ENCODE measurements at regions of chr5 and their contacts with region 1.

Region 1: GRCh38 chr5:139745800-139746690 is 49.6 kb upstream of the PSD2 start:
- DNase-seq: peak; percentile 84
- ATAC-seq: peak; percentile 29
- H3K4me3 ChIP-seq: peak overlapping the region in 4 of 5 experiments; percentile 57 to 71 (median 58)
- H3K4me3 Mint-ChIP-seq: peak overlapping the region; percentile 89
- H3K27ac ChIP-seq: peak overlapping the region; percentile 82 to 85
- H3K27ac Mint-ChIP-seq: peak overlapping the region; percentile 94
- H3K4me1 ChIP-seq: peaks cover 50 to 68% of the 10 kb centered on the region in 2 donors
- H3K4me1 Mint-ChIP-seq: peaks cover 79% of the 10 kb centered on the region
- H3K27me3 ChIP-seq: peaks cover 0 to 2% (median 0%) of the 10 kb centered on the region in 4 experiments
- H3K27me3 Mint-ChIP-seq: no peaks in the 10 kb centered on the region
- CTCF ChIP-seq: no peak

Region 2: DNA sequence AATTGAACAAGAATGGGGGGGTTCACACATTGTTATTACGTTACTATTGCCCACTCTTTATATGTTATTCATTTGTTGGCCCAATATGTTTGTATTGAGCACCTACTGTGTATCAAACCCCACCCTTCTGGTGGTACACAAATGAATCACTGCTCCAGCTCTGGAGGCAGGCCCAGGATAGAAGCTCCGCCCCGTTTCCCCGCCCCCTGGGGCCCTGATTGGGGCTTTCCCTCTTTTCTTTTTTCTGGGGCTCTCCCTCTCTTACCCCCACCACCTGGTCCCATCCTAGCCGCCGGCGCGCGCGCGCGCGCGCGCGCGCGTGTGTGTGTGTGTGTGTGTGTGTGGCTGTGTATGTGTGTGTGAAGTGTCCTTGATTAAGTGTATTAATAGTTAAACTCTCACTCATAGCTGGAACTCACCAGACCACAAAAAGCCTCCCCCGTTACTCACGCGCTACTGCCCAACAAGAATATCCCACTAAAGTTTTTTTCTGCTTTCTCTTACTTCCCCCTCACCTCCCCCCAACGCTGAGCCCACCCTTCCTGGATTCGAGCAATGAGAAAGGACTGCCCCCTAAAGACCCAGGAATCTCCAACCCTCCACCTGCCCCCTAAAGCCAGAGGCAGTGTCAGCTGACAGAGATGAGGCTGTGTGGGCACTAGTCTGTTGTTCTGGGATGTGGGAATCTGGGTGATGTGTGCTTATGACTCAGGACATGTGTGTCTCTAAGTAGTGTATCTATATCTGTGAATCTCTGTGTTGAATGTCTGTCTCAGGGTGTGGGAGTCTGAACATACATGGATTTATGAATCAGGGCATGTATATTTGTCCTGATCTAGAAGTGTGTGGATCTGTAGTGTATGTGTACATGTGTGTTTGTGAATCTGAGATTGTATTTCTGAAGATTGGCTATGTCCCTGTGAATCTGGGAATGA is 93.9 kb before region 1 on chr5:
- CTCF ChIA-PET with region 1: interaction called, 8 read pairs
- POLR2A ChIA-PET with region 1: interaction called, 32 read pairs
- intact Hi-C with region 1: loop called (anchors 2 kb)
- DNase-seq: peak; percentile 92
- ATAC-seq: peak; percentile 50
- H3K4me3 ChIP-seq: peak overlapping the region; percentile 50 to 98 (median 95)
- H3K4me3 Mint-ChIP-seq: peak overlapping the region; percentile 88
- H3K27ac ChIP-seq: peak overlapping the region; percentile 71 to 90
- H3K27ac Mint-ChIP-seq: peak overlapping the region; percentile 94
- H3K4me1 ChIP-seq: peaks cover 68 to 74% of the 10 kb centered on the region in 2 donors
- H3K4me1 Mint-ChIP-seq: peaks cover 71% of the 10 kb centered on the region
- H3K27me3 ChIP-seq: no peaks in the 10 kb centered on the region
- H3K27me3 Mint-ChIP-seq: no peaks in the 10 kb centered on the region
- CTCF ChIP-seq: no peak

Region 3: DNA sequence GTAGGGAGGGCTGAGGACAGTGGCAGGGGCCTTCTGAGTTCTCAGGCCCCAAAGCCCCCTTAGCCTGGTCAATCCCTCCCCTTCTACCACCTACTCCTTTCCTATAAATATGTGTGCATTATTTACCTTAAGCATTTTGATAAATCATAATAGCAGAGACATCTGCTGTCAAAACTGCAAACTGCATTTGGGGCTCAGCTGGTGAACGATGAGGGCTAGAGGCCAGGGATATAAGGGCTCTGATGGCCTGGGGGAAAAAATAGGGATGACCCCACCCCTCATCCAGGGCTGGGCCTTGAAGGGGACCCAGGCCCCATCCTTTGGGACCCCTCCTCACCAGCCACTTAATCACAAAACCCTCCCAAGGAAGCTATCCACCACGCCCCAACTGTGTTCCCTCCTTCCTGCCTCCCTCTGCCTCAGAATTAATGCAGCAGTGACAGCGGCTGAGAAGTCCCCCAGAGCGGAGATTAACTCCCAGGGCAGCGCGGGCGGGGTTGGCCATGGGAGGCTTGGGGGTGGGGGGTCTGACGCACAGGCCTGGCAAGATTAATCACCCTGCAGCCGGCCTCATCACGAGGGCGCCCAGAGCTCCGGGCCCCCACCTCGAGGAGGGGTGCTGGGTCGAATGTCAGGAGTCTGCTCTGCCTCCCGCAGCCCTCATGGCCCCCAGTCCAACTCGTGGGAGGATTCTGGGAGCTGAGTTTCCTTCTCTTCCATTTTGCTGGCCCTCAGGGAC is 55.8 kb before region 1 on chr5:
- CTCF ChIA-PET with region 1: interaction called, 10 read pairs
- POLR2A ChIA-PET with region 1: interaction called, 6 read pairs
- intact Hi-C with region 1: loop called (anchors 10 kb)
- DNase-seq: peak; percentile 71
- ATAC-seq: peak; percentile 51
- H3K4me3 ChIP-seq: peak overlapping the region in 2 of 5 experiments; percentile 8 to 9
- H3K4me3 Mint-ChIP-seq: peak overlapping the region; percentile 41
- H3K27ac ChIP-seq: peak overlapping the region; percentile 28 to 47
- H3K27ac Mint-ChIP-seq: peak overlapping the region; percentile 78
- H3K4me1 ChIP-seq: peaks cover 47 to 56% of the 10 kb centered on the region in 2 donors
- H3K4me1 Mint-ChIP-seq: peaks cover 52% of the 10 kb centered on the region
- H3K27me3 ChIP-seq: no peaks in the 10 kb centered on the region
- H3K27me3 Mint-ChIP-seq: no peaks in the 10 kb centered on the region
- CTCF ChIP-seq: peak; percentile 70

Region 4: DNA sequence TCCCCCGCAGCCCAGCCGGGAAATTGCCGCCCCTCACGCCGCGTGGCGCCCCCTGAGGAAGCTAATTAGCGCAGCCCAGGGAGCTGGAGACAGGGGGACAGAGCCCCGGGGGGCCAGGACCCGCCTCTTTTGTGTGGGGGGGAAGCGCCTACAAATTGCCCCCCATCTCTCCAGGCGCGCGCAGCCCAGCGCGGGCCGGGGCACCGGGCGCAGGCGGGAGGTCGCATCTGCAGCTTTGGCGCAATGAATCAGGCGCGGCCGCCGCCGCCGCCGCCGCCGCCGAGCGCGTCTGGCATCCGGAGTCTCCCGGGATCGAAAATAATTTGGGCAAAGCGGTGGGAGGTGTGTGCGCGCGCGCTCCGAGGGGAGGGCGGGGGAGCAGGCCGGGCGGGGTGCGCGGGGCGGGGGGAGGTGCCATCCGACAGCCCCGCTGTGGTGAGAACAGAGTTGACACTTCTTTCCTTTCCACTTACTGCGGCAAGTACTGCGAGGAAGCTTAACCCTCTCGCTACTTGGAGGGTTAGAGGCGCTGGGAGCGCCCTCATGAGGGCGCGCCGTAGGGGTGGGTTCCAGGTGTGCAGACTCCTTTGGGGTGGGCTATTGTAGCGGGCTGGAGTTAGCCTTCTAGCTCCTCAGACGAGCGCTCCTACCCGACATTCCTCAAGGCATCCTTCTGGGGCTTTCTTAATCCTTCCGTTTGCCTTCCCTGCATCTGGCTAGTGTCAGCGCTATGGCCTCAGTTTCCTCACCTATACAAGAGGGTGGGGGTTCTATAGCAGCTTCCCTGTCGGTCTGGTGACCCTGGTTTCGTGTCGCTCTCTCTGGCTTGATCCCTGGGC is 34.8 kb before region 1 on chr5:
- CTCF ChIA-PET with region 1: interaction called, 13 read pairs
- POLR2A ChIA-PET with region 1: interaction called, 69 read pairs
- intact Hi-C with region 1: loop called (anchors 1 kb)
- DNase-seq: peak; percentile 77
- ATAC-seq: peak; percentile 51
- H3K4me3 ChIP-seq: peak overlapping the region; percentile 54 to 73 (median 60)
- H3K4me3 Mint-ChIP-seq: peak overlapping the region; percentile 90
- H3K27ac ChIP-seq: peak overlapping the region in 1 of 2 donors; percentile 75
- H3K27ac Mint-ChIP-seq: peak overlapping the region; percentile 81
- H3K4me1 ChIP-seq: peaks cover 27 to 37% of the 10 kb centered on the region in 2 donors
- H3K4me1 Mint-ChIP-seq: peaks cover 40% of the 10 kb centered on the region
- H3K27me3 ChIP-seq: peaks cover 0 to 5% (median 2%) of the 10 kb centered on the region in 4 experiments
- H3K27me3 Mint-ChIP-seq: no peaks in the 10 kb centered on the region
- CTCF ChIP-seq: no peak

Region 5: DNA sequence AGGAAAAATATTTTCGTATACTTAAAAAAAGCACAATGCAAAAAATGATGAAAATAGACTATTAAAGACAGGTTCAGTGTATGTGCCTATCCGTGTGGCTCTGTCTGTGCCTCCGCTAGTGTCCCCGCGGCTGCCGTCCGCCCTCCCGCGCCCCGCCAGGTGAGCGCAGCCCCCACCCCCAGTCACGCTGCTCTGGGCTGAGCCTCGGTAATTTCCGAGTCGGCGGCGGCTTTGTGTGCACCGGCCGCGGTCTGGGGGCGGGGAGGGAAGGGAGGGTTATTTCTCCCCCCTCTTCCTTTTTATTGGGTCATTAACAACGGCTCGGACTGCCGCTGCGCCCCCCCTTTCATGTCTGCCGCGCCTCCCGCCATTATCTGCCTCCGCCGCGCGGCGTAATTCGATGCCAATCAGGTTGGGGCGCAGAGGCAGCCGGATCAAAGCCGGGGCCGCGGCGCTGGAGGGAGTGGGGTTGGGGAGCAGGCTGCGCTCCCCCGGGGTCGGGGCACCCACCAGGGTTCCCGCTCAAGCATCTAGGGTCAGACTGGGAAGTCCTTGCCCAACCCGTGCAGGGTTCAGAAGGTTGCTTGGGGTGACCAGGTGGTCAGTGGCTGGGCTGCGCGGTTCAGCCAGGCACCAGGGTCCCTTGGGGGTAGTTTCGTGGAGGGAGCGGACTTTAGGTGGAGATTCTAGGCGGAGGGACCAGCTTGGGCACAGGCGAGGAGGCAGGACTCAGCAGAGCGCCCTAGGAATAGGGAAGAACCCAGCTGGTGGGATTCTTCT is 10.0 kb after region 1 on chr5:
- CTCF ChIA-PET with region 1: interaction called, 8 read pairs
- POLR2A ChIA-PET with region 1: interaction called, 27 read pairs
- intact Hi-C with region 1: loop called (anchors 1 kb)
- DNase-seq: peak; percentile 76
- ATAC-seq: peak; percentile 71
- H3K4me3 ChIP-seq: peak overlapping the region in 4 of 5 experiments; percentile 25 to 40 (median 39)
- H3K4me3 Mint-ChIP-seq: peak overlapping the region; percentile 83
- H3K27ac ChIP-seq: no peak overlapping the region
- H3K27ac Mint-ChIP-seq: peak overlapping the region; percentile 65
- H3K4me1 ChIP-seq: peaks cover 44 to 47% of the 10 kb centered on the region in 2 donors
- H3K4me1 Mint-ChIP-seq: peaks cover 57% of the 10 kb centered on the region
- H3K27me3 ChIP-seq: peaks cover 0 to 24% (median 8%) of the 10 kb centered on the region in 4 experiments
- H3K27me3 Mint-ChIP-seq: peaks cover 17% of the 10 kb centered on the region
- CTCF ChIP-seq: no peak

Measured in B cell (primary cell).